PC-3 (cell line): ENCODE measurements at regions of chr18 and their contacts with region 1.

Region 1: GRCh38 chr18:9537677-9538076 is 62.4 kb downstream of the RALBP1 start:
- DNase-seq: no peak
- ATAC-seq: no peak
- H3K4me3 ChIP-seq: no peak overlapping the region
- H3K27ac ChIP-seq: no peak overlapping the region; the same call in 1 of the 2 replicates
- H3K4me1 ChIP-seq: peaks cover 37% of the 10 kb centered on the region
- H3K27me3 ChIP-seq: no peaks in the 10 kb centered on the region
- CTCF ChIP-seq: no peak

Region 2: DNA sequence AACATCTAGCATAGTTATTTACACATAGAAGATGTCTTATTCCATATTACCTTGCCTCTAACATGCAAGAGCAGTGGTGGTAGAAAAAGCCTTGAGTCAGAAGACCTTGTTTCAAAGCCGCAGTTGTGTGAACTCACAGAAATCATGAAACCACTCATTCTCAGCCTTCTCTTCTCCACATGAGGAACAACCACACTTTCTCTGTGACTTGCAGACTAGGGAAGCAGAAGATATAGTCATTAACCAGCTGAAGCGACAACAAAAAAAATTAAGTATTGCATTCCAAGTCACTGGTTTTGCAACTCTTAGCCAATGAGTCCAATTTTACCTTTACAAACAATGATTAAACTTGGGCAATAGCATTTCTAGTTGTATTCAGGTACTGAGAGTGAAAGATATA is 184.1 kb before region 1 on chr18:
- CTCF ChIA-PET with region 1: no interaction called
- POLR2A ChIA-PET with region 1: interaction called, 13 read pairs
- intact Hi-C with region 1: no loop called
- DNase-seq: no peak
- ATAC-seq: no peak
- H3K4me3 ChIP-seq: no peak overlapping the region
- H3K27ac ChIP-seq: no peak overlapping the region
- H3K4me1 ChIP-seq: peaks cover 7% of the 10 kb centered on the region
- H3K27me3 ChIP-seq: no peaks in the 10 kb centered on the region
- CTCF ChIP-seq: no peak

Region 3: DNA sequence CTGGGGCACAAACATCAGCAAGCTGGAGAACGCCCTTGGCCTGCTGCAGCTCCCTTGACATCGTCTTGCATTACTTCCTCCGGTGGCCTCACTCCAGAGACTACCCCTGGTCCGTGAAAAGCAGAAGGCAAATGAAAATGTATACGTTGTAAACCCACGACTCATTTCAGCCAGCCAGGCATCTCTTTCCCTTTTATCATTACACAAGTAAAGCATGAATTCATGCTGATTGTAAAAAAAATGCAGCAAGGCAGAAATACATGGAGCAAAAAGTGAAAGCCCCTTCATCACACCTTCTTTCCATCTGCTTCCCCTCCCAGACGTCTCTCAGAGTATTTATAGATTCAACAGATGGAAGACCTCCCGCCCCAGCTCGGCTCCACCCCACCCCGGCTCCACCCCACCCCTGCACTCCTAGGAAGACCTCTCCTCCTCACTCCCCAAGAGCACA is 104.0 kb before region 1 on chr18:
- CTCF ChIA-PET with region 1: no interaction called
- POLR2A ChIA-PET with region 1: no interaction called
- intact Hi-C with region 1: no loop called
- DNase-seq: no peak
- ATAC-seq: no peak
- H3K4me3 ChIP-seq: no peak overlapping the region
- H3K27ac ChIP-seq: no peak overlapping the region
- H3K4me1 ChIP-seq: no peaks in the 10 kb centered on the region
- H3K27me3 ChIP-seq: no peaks in the 10 kb centered on the region
- CTCF ChIP-seq: no peak